Activated naive CD4-positive, alpha-beta T cell treated with anti-CD3 and anti-CD28 coated beads for 36 hours (primary cell): ENCODE measurements at regions of chr16 and their contacts with region 1.

Region 1: DNA sequence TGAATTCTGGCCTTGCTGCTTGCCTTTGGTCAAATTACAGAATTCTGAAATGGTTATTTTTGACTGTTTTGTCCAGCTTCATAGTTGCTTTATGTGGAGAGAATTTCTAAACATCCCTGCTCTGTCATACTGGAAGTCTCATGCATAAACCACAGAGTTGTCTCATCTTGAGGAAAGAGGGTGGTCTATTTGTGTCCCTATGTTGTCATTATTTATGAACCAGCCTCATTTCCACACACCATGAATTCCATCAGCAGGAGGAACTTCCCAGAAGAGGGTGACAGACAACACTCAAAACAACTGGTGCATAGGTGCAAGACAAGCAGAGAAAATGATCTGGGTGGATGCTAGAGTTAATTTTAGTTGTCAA is 525.8 kb upstream of the GOT2 start:
- DNase-seq: peak; percentile 6
- H3K4me3 Mint-ChIP-seq: no peak overlapping the region
- H3K27ac Mint-ChIP-seq: no peak overlapping the region
- H3K4me1 Mint-ChIP-seq: peaks cover 29% of the 10 kb centered on the region
- H3K27me3 Mint-ChIP-seq: no peaks in the 10 kb centered on the region

Region 2: GRCh38 chr16:59192551-59193199 is 67.3 kb before region 1 on chr16:
- CTCF ChIA-PET with region 1: no interaction called
- intact Hi-C with region 1: loop called (anchors 1 kb)
- DNase-seq: peak; percentile 69
- H3K4me3 Mint-ChIP-seq: no peak overlapping the region
- H3K27ac Mint-ChIP-seq: no peak overlapping the region
- H3K4me1 Mint-ChIP-seq: peaks cover 7% of the 10 kb centered on the region
- H3K27me3 Mint-ChIP-seq: no peaks in the 10 kb centered on the region

Region 3: GRCh38 chr16:59213952-59214351 is 46.0 kb before region 1 on chr16:
- CTCF ChIA-PET with region 1: no interaction called
- intact Hi-C with region 1: loop called (anchors 2 kb)
- DNase-seq: no peak
- H3K4me3 Mint-ChIP-seq: no peak overlapping the region
- H3K27ac Mint-ChIP-seq: no peak overlapping the region
- H3K4me1 Mint-ChIP-seq: peaks cover 17% of the 10 kb centered on the region
- H3K27me3 Mint-ChIP-seq: no peaks in the 10 kb centered on the region

Region 4: GRCh38 chr16:59459806-59460205 is 199.9 kb after region 1 on chr16:
- CTCF ChIA-PET with region 1: no interaction called
- intact Hi-C with region 1: loop called (anchors 5 kb)
- DNase-seq: no peak
- H3K4me3 Mint-ChIP-seq: no peak overlapping the region
- H3K27ac Mint-ChIP-seq: no peak overlapping the region
- H3K4me1 Mint-ChIP-seq: peaks cover 9% of the 10 kb centered on the region
- H3K27me3 Mint-ChIP-seq: peaks cover 8% of the 10 kb centered on the region

Region 5: DNA sequence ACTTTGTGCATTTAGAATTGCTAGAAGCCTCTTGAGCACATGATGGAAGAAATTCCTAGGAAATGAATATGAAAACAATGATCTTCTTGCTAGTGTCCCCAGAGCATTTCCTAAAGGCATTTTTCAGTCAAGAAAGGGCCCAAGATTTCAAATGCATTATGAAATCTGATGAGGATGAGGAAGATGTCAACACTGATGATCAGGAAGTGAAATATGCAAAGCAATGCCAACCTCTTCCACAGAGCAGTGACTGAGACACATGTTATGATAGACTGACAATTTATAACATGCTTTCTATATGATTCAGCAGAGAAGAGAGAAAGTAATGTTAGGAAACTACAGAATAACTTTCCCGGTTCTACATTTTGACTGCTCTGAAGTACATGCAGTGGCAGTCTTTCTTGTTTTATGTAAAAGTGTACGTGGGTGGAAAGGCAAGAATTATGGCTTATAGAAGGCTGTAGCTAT is 333.3 kb after region 1 on chr16:
- CTCF ChIA-PET with region 1: no interaction called
- intact Hi-C with region 1: loop called (anchors 1 kb)
- DNase-seq: peak; percentile 5
- H3K4me3 Mint-ChIP-seq: no peak overlapping the region
- H3K27ac Mint-ChIP-seq: no peak overlapping the region
- H3K4me1 Mint-ChIP-seq: peaks cover 14% of the 10 kb centered on the region
- H3K27me3 Mint-ChIP-seq: peaks cover 12% of the 10 kb centered on the region